Caco-2 (cell line): ENCODE measurements at regions of chr6 and their contacts with region 1.

Region 1: DNA sequence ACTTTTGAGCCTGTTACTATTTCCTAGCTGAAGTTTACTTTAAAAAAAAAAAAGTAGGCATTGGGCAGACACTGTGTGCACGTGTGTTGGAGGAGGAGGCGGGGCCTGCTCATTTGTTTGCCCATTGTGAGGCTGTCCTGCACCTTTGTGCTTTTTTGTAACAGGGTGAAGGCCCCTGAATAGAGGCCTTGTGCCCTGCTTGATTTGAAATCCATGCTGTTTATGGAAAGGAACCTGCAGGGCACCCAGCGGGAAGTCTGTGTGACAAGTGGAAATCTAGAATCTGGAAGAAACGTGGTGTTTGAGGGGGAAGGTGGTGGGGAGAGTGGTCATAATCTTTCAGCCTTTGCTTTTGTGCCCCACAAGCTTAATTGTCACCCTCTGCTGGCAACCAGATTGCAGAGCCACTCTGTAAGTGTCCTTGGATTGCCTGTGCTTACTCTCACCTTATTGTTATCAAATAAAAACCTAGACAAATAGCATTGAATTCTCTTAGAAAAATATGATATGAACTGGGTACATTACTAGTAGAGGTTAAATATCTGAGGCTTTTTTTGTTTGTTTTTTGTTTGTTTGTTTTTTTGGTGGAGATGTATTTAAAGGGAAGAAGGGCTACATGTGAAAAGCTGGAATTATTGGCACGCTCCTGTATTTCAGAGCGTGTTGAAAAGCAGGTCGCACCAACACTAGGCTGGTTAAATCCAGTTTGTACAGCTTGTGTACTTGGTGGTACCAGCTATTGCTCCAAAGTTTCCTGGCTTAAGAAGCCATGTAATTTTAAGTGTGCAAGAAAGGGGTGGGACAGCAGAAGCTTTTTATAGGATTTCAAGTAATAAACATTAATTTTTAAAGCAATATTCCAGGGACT is 156.3 kb downstream of the ARID1B start:
- DNase-seq: peak; percentile 51 to 57
- H3K4me3 ChIP-seq: no peak overlapping the region
- H3K4me3 Mint-ChIP-seq: peak overlapping the region; percentile 31
- H3K27ac Mint-ChIP-seq: peak overlapping the region; percentile 14
- H3K4me1 ChIP-seq: peaks cover 20% of the 10 kb centered on the region
- H3K4me1 Mint-ChIP-seq: no peaks in the 10 kb centered on the region
- H3K27me3 ChIP-seq: no peaks in the 10 kb centered on the region
- H3K27me3 Mint-ChIP-seq: no peaks in the 10 kb centered on the region
- CTCF ChIP-seq: peak in 1 of 2 experiments; percentile 30

Region 2: DNA sequence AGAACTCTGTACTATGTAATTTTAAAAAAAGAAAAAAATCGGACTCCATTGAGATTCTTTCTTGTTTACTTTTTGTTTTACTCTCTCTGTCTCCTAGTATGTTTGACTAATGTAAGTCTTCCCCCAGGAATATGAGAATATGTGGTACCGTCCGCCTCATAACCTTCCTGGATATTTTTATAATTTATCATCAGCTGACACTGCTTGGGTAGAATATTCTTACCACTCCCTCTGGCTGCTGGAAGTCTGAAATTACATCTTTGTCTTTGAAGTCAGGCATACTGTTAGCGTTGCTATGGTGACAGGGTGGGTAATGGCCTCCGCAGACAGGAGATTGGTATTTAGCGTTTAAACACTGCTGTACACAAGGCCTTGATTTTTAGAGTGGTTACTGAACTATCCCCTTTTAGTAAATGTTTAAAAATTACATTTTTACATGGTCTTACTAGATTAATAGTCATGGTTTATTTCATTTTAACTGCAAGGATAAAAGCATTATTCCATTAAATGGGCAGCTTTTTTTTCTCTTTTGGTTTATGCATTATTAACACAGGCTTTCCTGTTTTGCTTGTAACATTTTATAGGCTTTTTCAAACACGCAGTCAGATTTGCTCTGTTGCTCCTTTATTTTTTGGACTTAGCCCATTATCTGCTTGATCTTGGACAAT is 20.2 kb after region 1 on chr6:
- CTCF ChIA-PET with region 1: no interaction called
- POLR2A ChIA-PET with region 1: no interaction called
- intact Hi-C with region 1: loop called (anchors 2 kb)
- DNase-seq: peak; percentile 57 to 76
- H3K4me3 ChIP-seq: no peak overlapping the region
- H3K4me3 Mint-ChIP-seq: no peak overlapping the region
- H3K27ac Mint-ChIP-seq: peak overlapping the region; percentile 60
- H3K4me1 ChIP-seq: peaks cover 23% of the 10 kb centered on the region
- H3K4me1 Mint-ChIP-seq: peaks cover 16% of the 10 kb centered on the region
- H3K27me3 ChIP-seq: no peaks in the 10 kb centered on the region
- H3K27me3 Mint-ChIP-seq: no peaks in the 10 kb centered on the region
- CTCF ChIP-seq: peak in 1 of 2 experiments; percentile 20

Region 3: DNA sequence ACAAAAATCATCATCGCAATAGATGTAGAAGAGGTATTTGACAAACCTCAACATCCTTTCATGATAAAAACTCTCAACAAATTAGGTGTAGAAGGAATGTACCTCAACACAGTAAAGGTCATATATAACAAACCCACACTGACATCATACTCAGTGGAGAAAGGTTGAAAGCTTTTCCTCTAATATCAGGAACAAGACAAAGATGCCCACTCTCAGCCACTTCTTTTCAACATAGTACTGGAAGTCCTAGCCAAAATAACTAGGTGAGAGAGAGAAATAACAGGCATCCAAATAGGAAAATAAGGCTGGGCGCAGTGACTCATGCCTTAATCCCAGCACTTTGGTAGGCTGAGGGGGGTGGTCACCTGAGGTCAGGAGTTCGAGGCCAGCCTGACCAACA is 543.4 kb after region 1 on chr6:
- CTCF ChIA-PET with region 1: interaction called, 12 read pairs
- POLR2A ChIA-PET with region 1: no interaction called
- intact Hi-C with region 1: no loop called
- DNase-seq: no peak
- H3K4me3 ChIP-seq: no peak overlapping the region
- H3K4me3 Mint-ChIP-seq: no peak overlapping the region
- H3K27ac Mint-ChIP-seq: no peak overlapping the region
- H3K4me1 ChIP-seq: no peaks in the 10 kb centered on the region
- H3K4me1 Mint-ChIP-seq: peaks cover 6% of the 10 kb centered on the region
- H3K27me3 ChIP-seq: no peaks in the 10 kb centered on the region
- H3K27me3 Mint-ChIP-seq: no peaks in the 10 kb centered on the region
- CTCF ChIP-seq: no peak